Left ventricle myocardium superior (tissue), 1 donor: ENCODE measurements at regions of chr21 and their contacts with region 1.

Region 1: GRCh38 chr21:38494703-38495102 is 3.6 kb downstream of the ERG start:
- DNase-seq: no peak
- ATAC-seq: no peak

Region 2: GRCh38 chr21:37994211-37994610 is 500.5 kb before region 1 on chr21:
- intact Hi-C with region 1: no loop called
- DNase-seq: no peak
- ATAC-seq: peak; percentile 45

Region 3: DNA sequence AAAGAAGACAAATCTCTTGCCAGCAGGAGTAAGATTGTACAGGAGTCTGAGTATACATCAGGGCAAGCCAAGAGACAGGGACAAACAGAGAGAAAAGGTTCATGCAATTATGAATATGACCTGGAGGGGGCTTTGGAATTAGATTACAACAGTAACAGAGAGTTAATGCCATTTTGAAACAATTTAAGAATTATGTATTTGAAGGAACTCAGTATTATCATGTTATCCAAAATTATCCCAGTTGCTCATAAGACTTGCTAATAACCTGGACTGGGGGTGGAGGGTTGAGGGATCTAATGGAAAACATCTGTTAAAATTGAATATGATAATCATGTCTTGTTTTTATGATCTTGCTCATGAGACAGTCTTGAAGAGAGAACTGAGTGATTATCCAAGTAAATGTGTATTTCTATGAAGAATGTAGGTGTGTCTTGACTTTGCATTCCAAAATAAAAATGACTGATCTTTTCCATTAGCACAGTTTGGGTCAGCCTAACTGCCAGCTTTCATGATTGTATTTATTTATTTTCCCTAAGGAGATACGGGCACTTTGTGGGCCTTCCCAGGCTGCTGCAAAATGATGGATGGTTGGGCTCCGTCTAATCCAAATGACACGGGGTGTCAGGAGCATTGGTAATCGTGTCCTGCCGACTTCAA is 114.1 kb before region 1 on chr21:
- intact Hi-C with region 1: loop called (anchors 10 kb)
- DNase-seq: no peak
- ATAC-seq: no peak